PC-9 (cell line): ENCODE measurements at regions of chr18 and their contacts with region 1.

Region 1: GRCh38 chr18:11995445-11996189 is 14.3 kb downstream of the IMPA2 start:
- DNase-seq: peak; percentile 49 to 70
- H3K4me3 ChIP-seq: no peak overlapping the region
- H3K27ac ChIP-seq: no peak overlapping the region
- H3K4me1 ChIP-seq: peaks cover 17% of the 10 kb centered on the region
- H3K27me3 ChIP-seq: no peaks in the 10 kb centered on the region
- CTCF ChIP-seq: peak; percentile 84

Region 2: DNA sequence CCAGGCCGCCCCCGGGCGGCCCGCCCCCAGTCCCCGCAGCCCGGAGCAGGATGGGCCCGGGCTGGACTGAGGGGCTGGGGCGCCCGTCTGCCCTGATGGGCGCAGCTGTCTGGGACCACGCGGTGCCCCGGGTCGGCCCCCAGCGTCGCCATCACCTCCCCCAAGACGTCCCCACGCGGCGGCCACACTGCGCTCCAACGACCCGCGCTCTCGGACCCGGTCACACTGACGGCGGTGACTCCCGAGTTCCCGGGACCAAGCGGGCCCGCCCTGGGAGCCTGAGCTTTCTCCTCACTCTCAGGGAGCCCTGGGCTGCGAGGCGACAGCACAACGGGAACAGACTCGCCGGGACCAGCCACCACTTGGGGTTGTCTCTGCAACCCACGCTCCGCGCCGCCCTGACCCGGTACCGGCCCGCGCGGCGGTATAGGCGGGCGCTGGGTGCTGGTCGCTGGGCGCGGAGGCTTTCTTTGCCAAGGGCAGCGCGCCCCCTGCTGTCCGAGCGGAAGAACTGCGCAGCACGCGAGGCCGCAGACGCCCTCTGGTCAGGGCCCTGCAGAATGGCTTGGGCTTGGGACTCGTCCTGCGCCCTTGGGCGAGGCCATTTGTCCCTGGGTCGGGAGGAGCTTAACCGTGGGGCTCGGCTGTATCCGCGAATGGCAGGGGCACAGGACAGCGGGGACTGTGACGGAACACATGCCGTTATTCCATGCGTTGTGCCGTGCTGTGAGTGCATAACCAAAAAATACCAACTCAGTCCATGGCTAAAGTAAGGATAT is 43.2 kb after region 1 on chr18:
- CTCF ChIA-PET with region 1: no interaction called
- POLR2A ChIA-PET with region 1: no interaction called
- intact Hi-C with region 1: loop called (anchors 5 kb)
- DNase-seq: peak; percentile 57 to 84
- H3K4me3 ChIP-seq: peak overlapping the region; percentile 60
- H3K27ac ChIP-seq: no peak overlapping the region
- H3K4me1 ChIP-seq: 0 out of 2 replicates have a peak, but pooled peaks cover 3% of the 10 kb centered on the region
- H3K27me3 ChIP-seq: no peaks in the 10 kb centered on the region
- CTCF ChIP-seq: peak; percentile 97

Region 3: GRCh38 chr18:12076424-12077140 is 81.0 kb after region 1 on chr18:
- CTCF ChIA-PET with region 1: no interaction called
- POLR2A ChIA-PET with region 1: no interaction called
- intact Hi-C with region 1: no loop called
- DNase-seq: peak in 1 of 2 experiments; percentile 47
- H3K4me3 ChIP-seq: peak overlapping the region; percentile 57; the same call in 1 of the 2 replicates
- H3K27ac ChIP-seq: no peak overlapping the region
- H3K4me1 ChIP-seq: no peaks in the 10 kb centered on the region
- H3K27me3 ChIP-seq: no peaks in the 10 kb centered on the region
- CTCF ChIP-seq: no peak

Region 4: DNA sequence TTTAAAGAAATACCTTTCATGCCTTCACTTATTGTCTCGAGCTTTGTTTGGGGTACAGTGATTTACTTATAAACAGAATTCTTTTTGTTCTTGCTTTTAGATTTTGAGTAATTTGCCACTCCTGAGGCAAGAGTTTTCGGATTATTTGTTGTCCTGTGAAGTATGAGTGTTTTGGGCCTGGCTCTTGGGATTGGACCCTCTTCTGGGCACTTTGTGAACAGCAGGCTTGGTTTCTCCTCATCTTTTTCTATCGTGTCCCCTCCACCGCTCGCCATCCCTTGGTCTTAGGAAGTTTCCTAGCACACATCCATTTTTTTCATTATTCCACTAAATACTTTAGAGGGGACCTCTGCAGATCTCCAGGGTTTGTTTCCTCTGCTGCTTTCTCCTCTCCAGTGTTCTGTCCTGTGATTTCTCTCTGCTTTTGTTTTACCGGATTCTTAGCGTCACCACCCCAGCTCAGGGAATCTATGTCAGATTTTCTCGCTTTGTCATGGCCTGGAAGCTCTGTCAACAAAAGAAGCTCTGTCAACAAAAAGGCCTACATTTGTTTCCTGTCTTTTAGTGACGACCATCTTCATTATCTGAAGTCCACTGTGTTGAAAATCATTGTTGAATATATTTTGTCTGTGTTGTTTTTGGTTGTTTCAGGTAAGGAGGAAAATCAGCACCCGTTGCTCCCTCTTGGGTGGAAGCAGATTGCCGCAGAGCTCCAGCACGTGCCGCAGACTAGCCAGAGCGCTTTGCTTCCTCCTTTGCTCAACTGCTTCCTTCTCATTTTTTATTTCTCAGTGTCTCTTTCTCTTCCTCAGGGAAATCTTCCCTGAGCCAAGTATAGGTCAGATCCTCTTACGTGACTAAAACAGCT is 125.8 kb after region 1 on chr18:
- CTCF ChIA-PET with region 1: no interaction called
- POLR2A ChIA-PET with region 1: no interaction called
- intact Hi-C with region 1: no loop called
- DNase-seq: no peak
- H3K4me3 ChIP-seq: no peak overlapping the region
- H3K27ac ChIP-seq: no peak overlapping the region
- H3K4me1 ChIP-seq: no peaks in the 10 kb centered on the region
- H3K27me3 ChIP-seq: no peaks in the 10 kb centered on the region
- CTCF ChIP-seq: peak; percentile 49